MCF 10A (cell line): ENCODE measurements at regions of chr20 and their contacts with region 1.

Region 1: DNA sequence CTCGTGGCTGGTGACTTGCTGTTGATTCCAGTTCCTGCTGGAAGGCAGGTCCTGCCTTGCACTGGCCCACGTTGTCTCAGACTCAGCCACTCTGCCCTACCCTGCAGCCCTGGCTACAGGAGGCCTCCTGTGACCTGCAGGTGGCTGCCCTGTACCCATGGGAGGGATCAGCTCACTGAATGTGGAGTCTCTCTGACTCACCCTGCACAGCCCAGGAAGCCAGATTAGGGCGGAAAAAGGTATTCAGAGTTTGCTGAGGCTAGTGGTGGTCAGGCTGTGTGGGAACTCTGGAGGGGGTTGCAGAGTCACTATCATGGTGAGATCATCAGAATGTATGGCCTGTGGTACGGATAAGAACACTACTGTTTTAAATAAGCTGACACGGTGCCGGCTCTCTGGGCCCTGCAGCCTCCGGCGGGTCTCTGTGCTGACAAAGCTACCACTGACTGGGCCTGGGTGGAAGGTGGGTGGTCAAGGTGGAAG is 24.7 kb upstream of the PYGB start:
- DNase-seq: peak; percentile 97
- H3K4me3 Mint-ChIP-seq: peak overlapping the region; percentile 29
- H3K27ac Mint-ChIP-seq: peak overlapping the region; percentile 82
- H3K4me1 Mint-ChIP-seq: peaks cover 23% of the 10 kb centered on the region
- H3K27me3 Mint-ChIP-seq: no peaks in the 10 kb centered on the region
- CTCF ChIP-seq: no peak

Region 2: DNA sequence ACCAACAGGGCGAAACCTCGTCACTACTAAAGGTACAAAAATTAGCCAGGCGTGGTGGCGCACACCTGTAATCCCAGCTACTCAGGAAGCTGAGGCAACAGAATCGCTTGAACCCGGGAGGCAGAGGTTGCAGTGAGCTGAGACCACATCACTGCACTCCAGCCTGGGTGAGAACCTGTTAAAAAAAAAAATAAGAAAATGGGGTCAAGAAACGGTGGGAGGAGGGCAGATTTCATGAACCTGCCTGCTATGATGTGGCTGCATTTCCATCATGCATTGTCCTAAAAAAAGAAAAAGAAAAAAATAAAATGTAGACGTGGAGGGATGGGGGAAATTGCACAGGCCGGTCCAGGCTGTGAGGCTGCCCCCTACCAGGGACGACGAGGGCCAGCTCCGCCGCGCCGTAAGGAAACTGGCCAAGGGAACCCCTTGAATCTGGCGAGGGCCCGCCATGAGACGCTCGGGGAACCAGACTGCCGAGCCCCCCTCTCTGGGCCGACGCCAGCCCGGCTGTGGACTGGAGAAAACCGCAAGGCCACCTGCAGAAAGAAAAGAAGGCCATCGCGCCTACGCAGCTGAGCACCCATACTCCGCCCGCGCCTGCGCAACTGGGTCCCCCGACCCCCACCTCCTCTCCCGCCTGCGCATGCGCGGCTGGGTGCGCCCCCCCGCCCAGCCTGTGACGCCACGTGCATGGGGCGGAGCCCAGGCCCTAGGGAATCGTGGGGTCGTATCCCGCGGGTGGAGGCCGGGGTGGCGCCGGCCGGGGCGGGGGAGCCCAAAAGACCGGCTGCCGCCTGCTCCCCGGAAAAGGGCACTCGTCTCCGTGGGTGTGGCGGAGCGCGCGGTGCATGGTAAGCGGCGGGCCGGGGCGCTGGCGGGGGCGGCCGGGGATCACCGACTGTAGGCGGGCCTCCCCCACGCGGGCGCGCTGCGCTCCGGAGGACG is 27.9 kb before region 1 on chr20 and contains the start of gene ENTPD6:
- CTCF ChIA-PET with region 1: interaction called, 5 read pairs
- POLR2A ChIA-PET with region 1: interaction called, 43 read pairs
- intact Hi-C with region 1: no loop called
- DNase-seq: peak; percentile 86
- H3K4me3 Mint-ChIP-seq: peak within 1 kb of the TSS; percentile 77
- H3K27ac Mint-ChIP-seq: peak within 1 kb of the TSS; percentile 5
- H3K4me1 Mint-ChIP-seq: peaks cover 28% of the 10 kb centered on the region
- H3K27me3 Mint-ChIP-seq: no peaks in the 10 kb centered on the region
- CTCF ChIP-seq: no peak
- total RNA-seq, gene ENTPD6: 98.0 and 99.5 TPM in 2 replicates

Region 3: DNA sequence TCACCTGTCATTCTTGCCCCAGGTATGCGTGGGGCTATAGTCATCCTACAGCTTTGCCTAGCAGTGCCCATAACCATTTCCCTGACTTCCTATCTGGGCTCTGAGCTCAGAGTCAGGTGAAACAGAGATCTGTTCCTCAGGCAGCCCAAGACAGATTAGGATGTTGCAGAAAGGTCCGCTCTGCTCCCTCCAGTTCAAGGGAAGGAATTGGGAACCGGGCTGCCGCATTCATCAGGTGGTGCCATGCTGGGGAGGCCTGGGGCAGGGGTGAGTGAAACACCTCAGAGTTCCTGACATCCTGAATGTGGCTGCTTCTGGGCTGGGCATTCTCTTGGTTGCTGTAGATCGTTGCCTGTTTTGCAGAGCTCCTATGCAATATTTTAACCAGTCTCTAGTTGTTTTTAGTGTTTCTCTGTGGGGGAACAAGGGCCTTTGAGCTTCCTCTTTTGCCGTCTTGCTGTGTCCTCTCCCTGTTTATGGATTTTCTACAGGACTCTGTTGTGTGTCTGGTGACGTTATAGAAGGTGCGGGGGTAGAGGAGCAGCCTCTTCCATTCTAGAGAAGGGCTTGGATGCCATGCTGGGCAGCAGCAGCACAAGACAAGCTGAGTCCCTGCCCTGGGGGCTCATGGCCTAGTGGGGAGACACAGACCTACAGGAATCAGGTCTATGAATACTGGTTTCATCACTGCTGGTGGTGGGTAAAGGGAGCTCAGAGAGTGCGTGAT is 18.5 kb before region 1 on chr20:
- CTCF ChIA-PET with region 1: interaction called, 12 read pairs
- POLR2A ChIA-PET with region 1: interaction called, 43 read pairs
- intact Hi-C with region 1: no loop called
- DNase-seq: no peak
- H3K4me3 Mint-ChIP-seq: no peak overlapping the region
- H3K27ac Mint-ChIP-seq: peak overlapping the region; percentile 89
- H3K4me1 Mint-ChIP-seq: peaks cover 37% of the 10 kb centered on the region
- H3K27me3 Mint-ChIP-seq: no peaks in the 10 kb centered on the region
- CTCF ChIP-seq: no peak

Region 4: GRCh38 chr20:25209911-25210310 is 13.3 kb before region 1 on chr20:
- CTCF ChIA-PET with region 1: interaction called, 12 read pairs
- POLR2A ChIA-PET with region 1: interaction called, 43 read pairs
- intact Hi-C with region 1: no loop called
- DNase-seq: no peak
- H3K4me3 Mint-ChIP-seq: no peak overlapping the region
- H3K27ac Mint-ChIP-seq: no peak overlapping the region
- H3K4me1 Mint-ChIP-seq: peaks cover 6% of the 10 kb centered on the region
- H3K27me3 Mint-ChIP-seq: no peaks in the 10 kb centered on the region
- CTCF ChIP-seq: no peak

Region 5: GRCh38 chr20:25237610-25238318 is 14.5 kb after region 1 on chr20:
- CTCF ChIA-PET with region 1: interaction called, 20 read pairs
- POLR2A ChIA-PET with region 1: interaction called, 58 read pairs
- intact Hi-C with region 1: no loop called
- DNase-seq: peak; percentile 100
- H3K4me3 Mint-ChIP-seq: peak overlapping the region; percentile 49
- H3K27ac Mint-ChIP-seq: peak overlapping the region; percentile 93
- H3K4me1 Mint-ChIP-seq: peaks cover 62% of the 10 kb centered on the region
- H3K27me3 Mint-ChIP-seq: no peaks in the 10 kb centered on the region
- CTCF ChIP-seq: no peak

Region 6: DNA sequence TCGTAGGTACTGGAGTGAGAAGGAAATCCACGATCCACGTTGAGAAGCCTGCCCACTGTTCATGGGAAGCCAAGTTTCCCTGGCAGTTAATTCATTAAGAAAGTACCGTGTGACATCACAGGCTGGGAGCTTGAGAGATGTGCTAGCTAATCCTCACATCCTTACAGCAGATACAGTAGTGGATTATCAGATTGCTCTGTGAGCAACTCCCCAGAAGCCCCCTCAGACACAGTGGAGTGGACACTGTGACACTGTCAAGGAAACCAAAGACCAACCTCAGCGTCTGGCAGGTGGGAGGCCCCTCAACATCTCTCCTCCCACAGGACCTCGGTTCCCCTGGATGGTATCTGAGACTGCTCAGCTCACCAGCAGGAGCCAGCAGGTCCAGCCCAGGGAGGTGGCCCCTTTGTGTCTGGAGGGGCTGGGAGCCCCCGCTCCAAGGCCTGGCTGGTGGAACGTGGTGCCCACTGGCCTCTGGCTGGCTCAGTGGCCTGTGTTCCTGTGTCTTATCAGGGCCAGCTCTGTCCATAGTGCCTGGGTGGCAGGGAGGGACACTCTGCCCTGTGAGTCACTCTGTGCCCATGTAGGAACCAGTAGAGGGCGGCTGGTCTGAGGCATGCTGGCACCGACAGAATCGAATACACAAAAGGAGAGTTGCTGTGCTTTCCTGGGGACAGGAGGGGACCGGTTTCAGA is 31.9 kb after region 1 on chr20:
- CTCF ChIA-PET with region 1: interaction called, 92 read pairs
- POLR2A ChIA-PET with region 1: interaction called, 517 read pairs
- intact Hi-C with region 1: no loop called
- DNase-seq: peak; percentile 68
- H3K4me3 Mint-ChIP-seq: peak overlapping the region; percentile 93
- H3K27ac Mint-ChIP-seq: peak overlapping the region; percentile 87
- H3K4me1 Mint-ChIP-seq: peaks cover 43% of the 10 kb centered on the region
- H3K27me3 Mint-ChIP-seq: no peaks in the 10 kb centered on the region
- CTCF ChIP-seq: peak; percentile 15